Endothelial cell of umbilical vein (primary cell): ENCODE measurements at regions of chr17 and their contacts with region 1.

Region 1: GRCh38 chr17:56939901-56940343 is 20.9 kb downstream of the COIL start:
- DNase-seq: peak; percentile 77
- H3K4me3 ChIP-seq: no peak overlapping the region
- H3K27ac ChIP-seq: peak overlapping the region; percentile 35
- H3K4me1 ChIP-seq: peaks cover 24% of the 10 kb centered on the region
- H3K27me3 ChIP-seq: no peaks in the 10 kb centered on the region
- CTCF ChIP-seq: peak; percentile 51 to 53
- POLR2A ChIP-seq: no peak

Region 2: GRCh38 chr17:56833809-56834379 is 106.0 kb before region 1 on chr17 and contains the starts of genes C17orf67 and DGKE:
- CTCF ChIA-PET with region 1: interaction called, 4 read pairs
- POLR2A ChIA-PET with region 1: no interaction called
- dilution Hi-C with region 1: no loop called
- intact Hi-C with region 1: loop called (anchors 1 kb)
- DNase-seq: peak; percentile 97
- H3K4me3 ChIP-seq: peak within 1 kb of the TSS; percentile 76 to 77 (median 77)
- H3K27ac ChIP-seq: peak within 1 kb of the TSS; percentile 83
- H3K4me1 ChIP-seq: peaks cover 45% of the 10 kb centered on the region
- H3K27me3 ChIP-seq: no peaks in the 10 kb centered on the region
- CTCF ChIP-seq: no peak
- POLR2A ChIP-seq: peak; percentile 56
- total RNA-seq, gene C17orf67: 5.6 and 5.8 TPM in 2 replicates
- total RNA-seq, gene DGKE: 20.3 and 22.9 TPM in 2 replicates

Region 3: GRCh38 chr17:56891784-56892183 is 48.1 kb before region 1 on chr17:
- CTCF ChIA-PET with region 1: interaction called, 9 read pairs
- POLR2A ChIA-PET with region 1: no interaction called
- dilution Hi-C with region 1: no loop called
- intact Hi-C with region 1: loop called (anchors 1 kb)
- DNase-seq: peak; percentile 28
- H3K4me3 ChIP-seq: no peak overlapping the region
- H3K27ac ChIP-seq: no peak overlapping the region
- H3K4me1 ChIP-seq: no peaks in the 10 kb centered on the region
- H3K27me3 ChIP-seq: no peaks in the 10 kb centered on the region
- CTCF ChIP-seq: peak; percentile 55 to 66
- POLR2A ChIP-seq: no peak